ENCODE measurements at regions of chrX and their contacts with region 1.

Region 1: DNA sequence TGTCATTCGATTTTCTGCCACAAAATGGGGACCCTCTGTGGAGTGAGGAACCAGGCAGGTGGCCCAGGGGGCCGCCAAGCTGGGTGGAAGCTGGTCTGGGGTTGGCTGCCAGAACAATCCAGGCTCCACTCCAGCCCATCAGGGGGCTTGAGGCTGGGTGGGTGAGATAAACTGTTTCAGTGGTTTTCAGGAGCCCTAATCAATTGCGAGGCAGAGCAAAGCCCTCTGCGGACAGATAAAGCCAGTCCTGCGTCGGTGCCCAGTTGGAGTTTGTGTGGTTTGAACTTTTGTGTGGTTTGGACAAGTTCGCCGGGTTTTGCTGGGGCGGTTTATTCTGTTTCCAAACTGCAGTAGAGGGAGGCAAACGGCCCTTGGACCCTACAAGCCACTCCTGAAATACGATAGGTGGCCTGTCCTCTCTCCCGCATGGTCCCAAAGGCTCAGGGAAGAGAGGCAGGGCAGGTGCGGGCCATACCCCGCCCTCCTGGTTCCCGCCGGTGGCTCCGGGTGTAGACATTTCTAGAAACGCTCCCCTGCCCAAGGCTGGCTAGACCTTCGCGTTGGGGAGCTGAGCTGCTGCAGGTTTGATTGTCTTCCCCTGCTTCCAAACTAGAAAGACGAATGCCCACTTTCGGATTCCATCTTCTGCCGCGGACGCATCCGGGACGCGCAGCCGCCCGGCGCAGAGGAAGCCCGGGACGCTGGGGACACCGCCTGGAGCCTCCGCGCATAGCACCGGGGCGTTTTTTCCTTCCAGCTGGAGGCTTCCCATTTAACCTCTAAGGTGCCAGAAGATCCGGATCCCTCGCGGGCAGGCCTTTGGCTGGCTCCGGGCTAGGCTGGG is 169.0 kb upstream of the BCOR start:
- H3K4me3 Mint-ChIP-seq: peak overlapping the region; percentile 70
- H3K27ac Mint-ChIP-seq: peak overlapping the region; percentile 84
- H3K4me1 Mint-ChIP-seq: peaks cover 26% of the 10 kb centered on the region
- H3K27me3 Mint-ChIP-seq: peaks cover 15% of the 10 kb centered on the region

Region 2: DNA sequence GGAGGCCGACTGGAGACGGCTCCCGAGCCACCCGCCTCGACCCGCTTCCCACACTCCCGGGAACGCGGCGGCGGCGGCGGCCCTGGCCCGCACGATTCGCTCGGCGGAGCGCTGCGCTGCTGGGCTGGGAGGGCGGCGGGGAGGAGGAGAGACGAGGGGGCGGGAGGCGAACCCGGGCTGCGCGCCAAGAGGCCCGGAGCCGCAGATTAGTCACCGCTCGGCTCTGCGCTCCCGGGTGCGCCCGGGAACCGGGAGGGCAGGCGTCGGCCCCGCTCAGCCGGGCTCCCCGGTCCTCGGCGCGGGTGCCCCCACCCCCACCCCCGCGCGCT is 157.8 kb before region 1 on chrX:
- intact Hi-C with region 1: loop called (anchors 2 kb)
- H3K4me3 Mint-ChIP-seq: peak overlapping the region; percentile 45
- H3K27ac Mint-ChIP-seq: no peak overlapping the region
- H3K4me1 Mint-ChIP-seq: peaks cover 23% of the 10 kb centered on the region
- H3K27me3 Mint-ChIP-seq: peaks cover 3% of the 10 kb centered on the region

Region 3: GRCh38 chrX:40175511-40176350 is 91.0 kb before region 1 on chrX:
- intact Hi-C with region 1: loop called (anchors 5 kb)
- H3K4me3 Mint-ChIP-seq: peak overlapping the region; percentile 65
- H3K27ac Mint-ChIP-seq: peak overlapping the region; percentile 91
- H3K4me1 Mint-ChIP-seq: peaks cover 55% of the 10 kb centered on the region
- H3K27me3 Mint-ChIP-seq: peaks cover 4% of the 10 kb centered on the region

Region 4: DNA sequence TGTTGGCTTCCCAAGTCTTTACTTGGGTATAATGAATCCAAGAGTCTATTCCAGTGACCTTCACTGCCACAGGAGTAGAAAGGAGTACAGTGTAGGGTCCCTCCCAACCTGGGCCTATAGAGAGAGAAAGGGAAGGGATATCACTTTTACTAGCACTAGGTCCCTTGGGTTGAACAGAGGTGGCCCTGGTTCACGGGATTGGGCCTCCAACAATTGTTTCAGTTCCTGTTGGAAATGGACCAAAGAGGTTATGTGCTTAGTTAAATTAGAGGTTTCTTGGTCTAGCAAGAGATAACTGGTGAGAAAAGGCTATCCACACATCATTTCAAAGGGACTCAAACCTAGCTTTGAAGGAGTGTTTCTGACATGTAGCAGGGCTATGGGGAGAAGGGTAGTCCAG is 525.7 kb after region 1 on chrX:
- intact Hi-C with region 1: no loop called
- H3K4me3 Mint-ChIP-seq: no peak overlapping the region
- H3K27ac Mint-ChIP-seq: no peak overlapping the region
- H3K4me1 Mint-ChIP-seq: peaks cover 21% of the 10 kb centered on the region
- H3K27me3 Mint-ChIP-seq: no peaks in the 10 kb centered on the region

Measured in dendritic cell treated with granulocyte-macrophage colony-stimulating factor and Interleukin-4, amounts not matched to agents 40 ng/mL and 50 ng/mL, for 4 days (primary cell).